MCF 10A (cell line): ENCODE measurements at regions of chr1 and their contacts with region 1.

Region 1: GRCh38 chr1:156356875-156357534 is 12.0 kb upstream of the RHBG start:
- DNase-seq: peak; percentile 85
- H3K4me3 Mint-ChIP-seq: no peak overlapping the region
- H3K27ac Mint-ChIP-seq: no peak overlapping the region
- H3K4me1 Mint-ChIP-seq: peaks cover 7% of the 10 kb centered on the region
- H3K27me3 Mint-ChIP-seq: peaks cover 52% of the 10 kb centered on the region
- CTCF ChIP-seq: peak; percentile 98

Region 2: GRCh38 chr1:156346636-156347035 is 10.4 kb before region 1 on chr1:
- CTCF ChIA-PET with region 1: interaction called, 38 read pairs
- POLR2A ChIA-PET with region 1: interaction called, 3 read pairs
- intact Hi-C with region 1: no loop called
- DNase-seq: no peak
- H3K4me3 Mint-ChIP-seq: no peak overlapping the region
- H3K27ac Mint-ChIP-seq: no peak overlapping the region
- H3K4me1 Mint-ChIP-seq: no peaks in the 10 kb centered on the region
- H3K27me3 Mint-ChIP-seq: no peaks in the 10 kb centered on the region
- CTCF ChIP-seq: no peak

Region 3: GRCh38 chr1:156371553-156372264 is 14.7 kb after region 1 on chr1:
- CTCF ChIA-PET with region 1: interaction called, 20 read pairs
- POLR2A ChIA-PET with region 1: interaction called, 6 read pairs
- intact Hi-C with region 1: no loop called
- DNase-seq: peak; percentile 77
- H3K4me3 Mint-ChIP-seq: no peak overlapping the region
- H3K27ac Mint-ChIP-seq: no peak overlapping the region
- H3K4me1 Mint-ChIP-seq: peaks cover 6% of the 10 kb centered on the region
- H3K27me3 Mint-ChIP-seq: peaks cover 33% of the 10 kb centered on the region
- CTCF ChIP-seq: no peak